ENCODE measurements at regions of chr2 and their contacts with region 1.

Region 1: DNA sequence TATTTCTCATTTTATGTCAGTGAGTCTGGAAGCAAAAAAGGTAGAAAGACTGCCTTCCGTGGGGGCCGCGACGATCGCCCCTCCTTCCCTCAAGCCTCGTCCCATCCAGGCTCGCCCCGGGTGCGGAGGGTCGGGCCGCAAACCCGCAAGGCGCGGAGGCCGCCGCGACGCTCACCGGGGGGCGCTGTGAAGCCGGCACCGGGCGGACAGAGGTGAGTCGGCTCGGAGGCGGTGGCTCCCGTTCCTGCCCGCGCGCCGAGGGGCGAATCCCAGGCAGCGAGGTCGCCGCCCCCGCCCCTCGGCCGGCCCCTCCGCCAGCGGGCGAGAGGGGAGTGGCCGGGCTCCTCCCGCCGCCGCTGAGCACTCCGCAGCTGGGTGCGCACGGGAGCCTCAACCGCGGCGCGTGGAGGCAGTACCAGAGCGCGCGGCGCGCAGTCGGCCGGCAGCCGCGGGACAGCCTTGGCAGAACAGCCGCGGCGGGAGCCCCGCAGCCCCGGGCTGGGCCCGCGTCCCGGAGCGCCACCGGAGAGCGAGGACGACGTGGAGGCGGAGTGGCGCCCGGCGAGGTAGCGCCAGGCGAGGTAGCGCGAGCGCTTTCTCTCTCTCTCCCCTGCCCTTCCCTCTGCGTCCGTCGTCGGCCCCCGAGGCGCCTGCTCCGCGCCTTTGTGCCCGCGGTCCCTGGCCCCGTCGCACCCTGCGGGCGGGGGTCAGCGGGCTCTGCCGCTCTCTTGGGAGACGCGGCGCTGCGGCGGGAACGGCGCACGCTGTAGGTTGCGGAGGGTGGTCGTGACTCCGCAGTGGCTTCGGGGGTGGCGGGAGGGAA is at the start of gene MYO1B:
- DNase-seq: peak; percentile 89
- H3K4me3 ChIP-seq: peak within 1 kb of the TSS; percentile 62 to 95 (median 79)
- H3K27ac ChIP-seq: peak within 1 kb of the TSS; percentile 88
- H3K4me1 ChIP-seq: peaks cover 31% of the 10 kb centered on the region
- H3K27me3 ChIP-seq: no peaks in the 10 kb centered on the region
- CTCF ChIP-seq: peak; percentile 33 to 71
- total RNA-seq, gene MYO1B: 165 to 435 TPM

Region 2: GRCh38 chr2:191171708-191172355 is 73.4 kb before region 1 on chr2:
- CTCF ChIA-PET with region 1: interaction called, 4 read pairs
- dilution Hi-C with region 1: no loop called
- in situ Hi-C with region 1: loop called (anchors 5 to 10 kb)
- intact Hi-C with region 1: loop called (anchors 1 kb)
- DNase-seq: peak; percentile 99
- H3K4me3 ChIP-seq: no peak overlapping the region
- H3K27ac ChIP-seq: peak overlapping the region; percentile 99
- H3K4me1 ChIP-seq: peaks cover 72% of the 10 kb centered on the region
- H3K27me3 ChIP-seq: no peaks in the 10 kb centered on the region
- CTCF ChIP-seq: no peak

Region 3: DNA sequence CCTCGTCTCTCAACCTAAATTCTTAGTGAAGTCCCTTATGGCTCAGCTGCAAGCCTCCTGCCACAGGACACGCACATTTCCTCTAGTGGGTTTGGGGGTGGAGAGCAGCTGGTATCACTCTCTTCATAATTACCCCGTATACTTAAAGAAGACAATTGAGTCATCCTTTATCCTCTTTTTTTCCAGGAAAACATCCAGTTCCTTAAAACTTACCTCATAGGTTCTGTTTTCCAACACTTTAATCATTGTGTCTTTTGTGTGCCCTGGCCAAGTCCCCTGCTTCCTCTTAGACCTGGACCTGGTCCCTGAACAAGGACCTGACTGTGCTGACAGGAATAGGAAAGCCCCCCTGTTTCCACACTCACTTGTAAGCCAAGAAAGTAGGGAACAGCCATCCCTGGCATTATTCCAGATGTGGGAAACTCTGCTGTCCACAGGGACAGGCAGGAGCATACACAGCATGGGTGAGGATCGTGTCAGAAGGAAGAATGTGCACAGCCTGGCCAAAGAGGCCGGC is 42.3 kb before region 1 on chr2:
- CTCF ChIA-PET with region 1: no interaction called
- dilution Hi-C with region 1: no loop called
- in situ Hi-C with region 1: no loop called
- intact Hi-C with region 1: loop called (anchors 1 kb)
- DNase-seq: peak; percentile 71
- H3K4me3 ChIP-seq: no peak overlapping the region
- H3K27ac ChIP-seq: peak overlapping the region; percentile 100
- H3K4me1 ChIP-seq: peaks cover 18% of the 10 kb centered on the region
- H3K27me3 ChIP-seq: no peaks in the 10 kb centered on the region
- CTCF ChIP-seq: no peak

Region 4: DNA sequence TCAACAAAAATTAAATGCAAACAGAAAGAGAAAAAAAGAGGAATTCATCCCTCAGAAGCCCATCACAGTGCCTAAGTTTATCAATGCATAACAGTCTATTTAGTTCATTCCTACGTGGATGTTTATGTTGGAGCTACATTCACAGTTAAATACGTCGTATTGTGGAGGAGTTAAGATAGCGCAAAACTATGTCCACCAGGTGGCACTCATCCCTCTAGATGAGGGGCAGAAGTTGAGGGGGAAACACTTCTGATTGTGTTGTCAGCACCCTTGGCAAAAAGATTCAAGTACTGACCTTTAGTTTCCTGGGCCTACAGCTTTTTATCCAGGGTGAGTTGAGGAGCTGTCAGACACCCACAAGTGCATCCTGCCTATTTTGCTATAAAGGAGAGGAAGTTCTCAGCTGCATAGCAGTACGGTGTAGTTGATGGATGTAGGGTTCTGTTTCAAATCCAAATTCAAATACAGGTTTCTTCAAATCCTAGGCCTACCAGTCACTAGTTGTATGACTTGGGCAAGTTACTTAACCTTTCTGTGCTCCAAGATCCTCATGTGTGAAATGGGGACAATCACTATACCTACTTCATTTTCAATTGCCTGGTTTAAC is 26.9 kb before region 1 on chr2:
- CTCF ChIA-PET with region 1: no interaction called
- dilution Hi-C with region 1: no loop called
- in situ Hi-C with region 1: no loop called
- intact Hi-C with region 1: loop called (anchors 1 kb)
- DNase-seq: peak; percentile 46
- H3K4me3 ChIP-seq: no peak overlapping the region
- H3K27ac ChIP-seq: peak overlapping the region; percentile 88
- H3K4me1 ChIP-seq: peaks cover 52% of the 10 kb centered on the region
- H3K27me3 ChIP-seq: no peaks in the 10 kb centered on the region
- CTCF ChIP-seq: peak; percentile 62 to 64

Region 5: GRCh38 chr2:191280304-191280703 is 35.0 kb after region 1 on chr2:
- CTCF ChIA-PET with region 1: no interaction called
- dilution Hi-C with region 1: no loop called
- in situ Hi-C with region 1: no loop called
- intact Hi-C with region 1: loop called (anchors 2 kb)
- DNase-seq: no peak
- H3K4me3 ChIP-seq: no peak overlapping the region
- H3K27ac ChIP-seq: no peak overlapping the region
- H3K4me1 ChIP-seq: no peaks in the 10 kb centered on the region
- H3K27me3 ChIP-seq: no peaks in the 10 kb centered on the region
- CTCF ChIP-seq: no peak

Region 6: GRCh38 chr2:191291471-191291870 is 46.2 kb after region 1 on chr2:
- CTCF ChIA-PET with region 1: no interaction called
- dilution Hi-C with region 1: no loop called
- in situ Hi-C with region 1: no loop called
- intact Hi-C with region 1: no loop called
- DNase-seq: no peak
- H3K4me3 ChIP-seq: no peak overlapping the region
- H3K27ac ChIP-seq: no peak overlapping the region
- H3K4me1 ChIP-seq: peaks cover 23% of the 10 kb centered on the region
- H3K27me3 ChIP-seq: no peaks in the 10 kb centered on the region
- CTCF ChIP-seq: no peak

Region 7: DNA sequence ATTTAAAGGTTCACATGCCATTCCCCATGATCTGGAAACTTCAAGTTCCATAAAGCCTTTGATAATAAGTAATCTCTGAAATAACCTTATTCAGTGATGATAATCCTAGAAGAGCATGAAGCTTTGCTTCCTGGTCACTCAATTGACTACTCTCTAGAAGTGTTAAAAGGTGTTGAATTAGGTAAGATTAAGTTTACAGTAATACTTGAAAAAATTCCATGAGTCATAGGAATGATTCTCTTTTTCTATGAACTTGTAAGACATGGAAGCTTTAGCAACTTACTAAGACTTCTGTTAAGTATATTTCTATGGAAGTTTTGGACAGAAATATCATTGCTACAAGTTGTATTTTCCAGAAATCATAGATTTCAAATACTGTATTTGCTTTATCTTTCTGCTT is 100.5 kb after region 1 on chr2:
- CTCF ChIA-PET with region 1: no interaction called
- dilution Hi-C with region 1: no loop called
- in situ Hi-C with region 1: no loop called
- intact Hi-C with region 1: loop called (anchors 5 kb)
- DNase-seq: peak; percentile 43
- H3K4me3 ChIP-seq: no peak overlapping the region
- H3K27ac ChIP-seq: no peak overlapping the region
- H3K4me1 ChIP-seq: peaks cover 14% of the 10 kb centered on the region
- H3K27me3 ChIP-seq: no peaks in the 10 kb centered on the region
- CTCF ChIP-seq: no peak

Region 8: DNA sequence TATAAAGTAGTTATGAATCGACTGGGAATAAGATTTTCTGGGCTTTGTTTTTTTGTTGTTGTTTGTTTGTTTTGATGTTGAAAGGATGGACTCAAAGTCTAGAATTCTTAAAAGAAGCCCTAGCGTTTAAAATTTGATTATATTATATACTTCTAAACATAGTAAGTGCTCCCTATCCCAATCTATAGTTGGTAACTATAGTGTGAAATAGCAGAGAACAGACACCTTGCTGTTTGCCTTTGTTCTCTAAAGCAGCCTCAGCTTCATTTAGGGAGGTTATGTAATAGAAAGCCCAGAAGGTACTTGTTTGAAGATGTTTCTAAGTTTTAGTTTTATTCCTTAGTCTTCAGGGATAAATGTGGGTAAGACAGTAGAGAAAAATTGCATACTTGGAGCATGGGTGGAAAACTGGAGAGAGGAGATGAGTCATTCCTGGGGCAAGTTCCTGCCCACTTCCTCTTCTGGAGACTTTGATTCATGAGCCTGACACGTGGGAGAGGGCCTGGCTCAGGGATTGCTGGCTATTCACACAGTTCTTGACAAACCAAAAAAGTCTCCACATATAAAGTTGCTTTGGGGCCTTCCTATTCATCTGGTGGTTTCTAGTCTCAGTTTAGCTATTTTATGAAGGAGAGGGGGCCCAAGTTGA is 131.8 kb after region 1 on chr2:
- CTCF ChIA-PET with region 1: no interaction called
- dilution Hi-C with region 1: no loop called
- in situ Hi-C with region 1: no loop called
- intact Hi-C with region 1: loop called (anchors 5 kb)
- DNase-seq: peak; percentile 86
- H3K4me3 ChIP-seq: peak overlapping the region in 1 of 3 experiments; percentile 6
- H3K27ac ChIP-seq: peak overlapping the region; percentile 78
- H3K4me1 ChIP-seq: peaks cover 20% of the 10 kb centered on the region
- H3K27me3 ChIP-seq: no peaks in the 10 kb centered on the region
- CTCF ChIP-seq: no peak

Region 9: GRCh38 chr2:191401287-191401686 is 156.0 kb after region 1 on chr2:
- CTCF ChIA-PET with region 1: no interaction called
- dilution Hi-C with region 1: no loop called
- in situ Hi-C with region 1: no loop called
- intact Hi-C with region 1: no loop called
- DNase-seq: no peak
- H3K4me3 ChIP-seq: no peak overlapping the region
- H3K27ac ChIP-seq: no peak overlapping the region
- H3K4me1 ChIP-seq: no peaks in the 10 kb centered on the region
- H3K27me3 ChIP-seq: no peaks in the 10 kb centered on the region
- CTCF ChIP-seq: no peak

Region 10: DNA sequence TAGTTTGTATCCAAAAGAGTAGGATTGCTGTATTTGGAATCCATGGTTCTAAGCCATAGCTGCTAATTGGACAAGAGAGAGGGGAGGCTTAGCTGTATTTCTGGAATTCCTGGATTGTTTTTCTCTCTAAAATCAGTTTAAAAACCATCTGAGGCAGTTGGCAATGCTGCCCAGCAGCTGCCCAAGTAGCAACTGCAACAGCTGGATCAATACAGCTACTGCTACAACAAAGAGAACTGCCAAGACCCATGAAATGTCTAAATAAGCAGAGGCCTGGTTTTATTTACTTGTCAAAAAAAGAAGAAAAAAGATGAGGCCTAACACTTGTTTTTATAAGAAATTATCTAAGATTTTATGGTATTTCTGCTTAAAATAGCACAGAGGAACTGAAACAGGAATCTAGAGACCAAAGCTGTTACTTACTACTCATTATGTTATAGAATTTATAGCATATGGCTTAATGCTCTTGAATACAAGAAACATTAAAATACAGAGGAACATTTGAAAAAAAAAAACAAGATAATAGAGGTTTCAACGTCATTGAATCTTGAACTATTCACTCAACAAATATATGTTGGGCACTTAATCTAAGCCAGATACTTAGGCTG is 910.4 kb after region 1 on chr2:
- CTCF ChIA-PET with region 1: no interaction called
- dilution Hi-C with region 1: no loop called
- in situ Hi-C with region 1: no loop called
- intact Hi-C with region 1: no loop called
- DNase-seq: no peak
- H3K4me3 ChIP-seq: no peak overlapping the region
- H3K27ac ChIP-seq: no peak overlapping the region
- H3K4me1 ChIP-seq: no peaks in the 10 kb centered on the region
- H3K27me3 ChIP-seq: no peaks in the 10 kb centered on the region
- CTCF ChIP-seq: no peak

Measured in mammary epithelial cell (primary cell).